Heart left ventricle (tissue), 16 donors: ENCODE measurements at regions of chr16 and their contacts with region 1.

Region 1: DNA sequence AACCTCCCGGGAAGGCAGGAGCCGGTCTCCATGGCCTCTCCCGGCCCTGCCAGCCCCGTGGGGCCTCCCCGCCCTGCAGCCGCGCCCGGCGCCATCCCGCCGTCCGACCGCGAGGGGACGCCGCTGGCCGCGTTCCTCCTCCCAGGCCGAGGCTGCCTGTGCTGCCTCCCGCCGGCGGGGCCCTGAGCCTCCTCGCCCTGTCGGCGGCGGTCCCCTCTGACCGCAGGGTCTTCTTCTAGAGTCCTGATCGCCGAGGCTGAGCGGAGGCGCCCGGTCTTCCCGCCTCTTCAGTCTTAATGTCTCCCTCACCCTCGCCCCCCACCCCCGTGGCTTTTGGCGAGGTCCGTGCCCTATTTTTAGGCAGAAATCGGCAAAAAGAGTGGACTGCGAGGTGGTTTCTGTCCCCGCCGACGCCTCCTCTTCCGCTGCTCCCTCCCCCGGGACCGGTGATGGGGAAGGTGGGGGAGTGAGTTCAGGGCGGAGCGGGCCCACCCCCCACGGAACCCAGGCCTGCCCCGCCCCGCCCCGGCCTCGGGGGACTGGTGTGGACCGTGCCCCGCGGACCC is 794 bp upstream of the CPNE7 start:
- DNase-seq: peak in 1 of 5 donors; percentile 46
- ATAC-seq: peak in 3 of 4 donors; percentile 52 to 80 (median 67)
- H3K4me3 ChIP-seq: peak overlapping the region; percentile 13 to 48 (median 34)
- H3K27ac ChIP-seq: no peak overlapping the region
- H3K4me1 ChIP-seq: peaks cover 4 to 27% (median 14%) of the 10 kb centered on the region in 12 donors
- H3K27me3 ChIP-seq: peaks cover 26 to 70% (median 39%) of the 10 kb centered on the region in 9 donors
- CTCF ChIP-seq: peak; percentile 22 to 75 (median 57)
- POLR2A ChIP-seq: no peak

Region 2: DNA sequence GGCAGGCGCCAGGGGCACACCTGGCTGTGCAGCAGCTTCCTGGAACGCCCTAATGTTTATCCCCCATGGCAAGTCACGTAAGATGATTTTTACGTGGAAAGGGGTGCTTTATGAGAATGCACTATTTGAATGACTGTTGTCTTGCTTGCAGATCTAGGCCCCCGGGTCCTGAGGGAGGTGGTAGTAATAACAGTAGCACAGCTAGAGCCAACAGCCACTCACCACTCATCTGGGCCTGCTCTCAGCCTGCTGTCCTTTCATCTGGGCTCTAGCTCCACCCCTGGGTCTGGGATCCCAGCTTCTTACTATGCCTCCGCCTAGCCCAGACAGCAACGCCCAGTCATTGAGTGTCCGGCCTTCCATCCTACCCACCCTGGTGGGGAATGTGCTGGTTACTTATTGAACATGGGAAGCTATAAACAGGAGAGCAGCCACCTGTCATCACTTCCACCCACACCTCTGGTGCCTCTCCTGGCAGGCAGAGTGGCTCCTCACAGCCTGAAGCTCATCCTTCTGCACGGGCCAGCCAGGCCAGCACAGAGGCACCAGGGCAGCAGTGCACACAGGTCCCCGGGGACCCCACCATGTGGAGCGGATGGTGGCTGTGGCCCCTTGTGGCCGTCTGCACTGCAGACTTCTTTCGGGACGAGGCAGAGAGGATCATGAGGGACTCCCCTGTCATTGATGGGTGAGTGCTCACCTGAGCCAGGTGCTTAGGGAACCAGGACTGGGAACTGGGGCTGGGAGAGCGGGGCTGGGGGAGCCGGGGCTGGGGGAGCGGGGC is 55.3 kb after region 1 on chr16:
- intact Hi-C with region 1: no loop called
- DNase-seq: no peak
- ATAC-seq: no peak
- H3K4me3 ChIP-seq: no peak overlapping the region
- H3K27ac ChIP-seq: no peak overlapping the region
- H3K4me1 ChIP-seq: no peaks in the 10 kb centered on the region
- H3K27me3 ChIP-seq: peaks cover 0 to 31% (median 15%) of the 10 kb centered on the region in 9 donors
- CTCF ChIP-seq: no peak
- POLR2A ChIP-seq: no peak

Region 3: DNA sequence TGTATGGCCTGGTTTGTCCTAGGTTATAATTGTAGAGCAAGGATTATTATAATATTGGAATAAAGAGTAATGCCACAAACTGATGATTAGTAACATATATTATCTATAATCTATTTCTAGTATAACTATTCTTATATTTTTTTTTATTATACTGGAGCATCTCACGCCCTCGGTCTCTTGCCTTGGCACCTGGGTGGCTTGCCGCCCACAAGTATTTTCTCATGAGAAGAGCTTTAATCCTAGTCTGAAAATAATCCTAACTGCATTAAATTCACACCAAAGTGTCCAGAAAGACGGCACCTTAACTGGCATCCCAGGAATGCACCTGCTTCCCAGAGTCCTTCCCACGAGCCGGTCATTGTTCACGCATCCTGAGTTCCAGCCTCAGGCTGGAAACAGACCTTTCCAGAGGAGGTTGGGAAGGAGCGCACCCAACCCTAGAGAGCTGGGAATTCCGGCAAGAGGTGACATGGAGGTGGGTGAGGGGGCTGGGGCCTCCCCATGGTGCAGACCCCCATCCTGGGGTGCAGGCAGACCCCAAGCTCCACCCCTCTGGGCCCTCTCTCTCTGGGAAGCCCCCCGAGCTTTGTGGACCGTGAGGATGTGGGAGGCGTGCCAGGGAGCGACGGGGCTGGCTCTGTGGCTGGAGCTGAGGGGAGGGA is 66.8 kb after region 1 on chr16:
- intact Hi-C with region 1: loop called in 6 of 10 experiments (anchors 2 to 10 kb)
- DNase-seq: peak in 1 of 5 donors; percentile 62
- ATAC-seq: no peak
- H3K4me3 ChIP-seq: peak overlapping the region in 7 of 12 donors; percentile 40 to 62 (median 48)
- H3K27ac ChIP-seq: no peak overlapping the region
- H3K4me1 ChIP-seq: peaks cover 0 to 17% (median 7%) of the 10 kb centered on the region in 12 donors
- H3K27me3 ChIP-seq: no peaks in the 10 kb centered on the region
- CTCF ChIP-seq: peak in 1 of 12 donors; percentile 2
- POLR2A ChIP-seq: no peak